ENCODE measurements at regions of chr20 and their contacts with region 1.

Region 1: GRCh38 chr20:11581271-11581670 is 336.4 kb upstream of the BTBD3 start:
- DNase-seq: no peak
- ATAC-seq: peak; percentile 45
- H3K4me3 ChIP-seq: no peak overlapping the region
- H3K27ac ChIP-seq: no peak overlapping the region
- H3K4me1 ChIP-seq: no peaks in the 10 kb centered on the region
- H3K27me3 ChIP-seq: no peaks in the 10 kb centered on the region
- CTCF ChIP-seq: no peak
- EP300 ChIP-seq: no peak
- POLR2A ChIP-seq: no peak
- RAD21 ChIP-seq: no peak

Region 2: DNA sequence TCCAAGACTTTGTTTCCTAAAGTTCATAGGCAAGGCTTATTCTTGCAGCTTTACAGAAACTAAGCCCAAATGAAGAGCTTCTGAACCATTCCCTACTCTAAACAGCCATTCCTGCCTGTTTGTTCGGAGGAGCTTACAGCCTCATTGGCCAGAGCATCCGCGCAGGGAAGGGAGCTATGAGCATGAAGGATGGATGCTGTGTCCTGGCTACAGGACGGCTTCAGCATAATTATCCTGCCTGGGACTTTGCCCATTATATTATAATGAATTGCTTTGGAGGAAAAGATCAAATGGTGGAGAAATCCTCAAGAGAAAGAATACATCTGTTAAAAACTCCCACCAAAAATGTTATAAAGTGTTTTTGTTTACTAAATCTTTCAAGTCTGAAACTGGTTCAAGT is 41.8 kb before region 1 on chr20:
- CTCF ChIA-PET with region 1: no interaction called
- POLR2A ChIA-PET with region 1: no interaction called
- RAD21 ChIA-PET with region 1: no interaction called
- SMC1A ChIA-PET with region 1: no interaction called
- in situ Hi-C with region 1: no loop called
- intact Hi-C with region 1: no loop called
- DNase-seq: no peak
- ATAC-seq: no peak
- H3K4me3 ChIP-seq: no peak overlapping the region
- H3K27ac ChIP-seq: no peak overlapping the region
- H3K4me1 ChIP-seq: no peaks in the 10 kb centered on the region
- H3K27me3 ChIP-seq: no peaks in the 10 kb centered on the region
- CTCF ChIP-seq: no peak
- EP300 ChIP-seq: no peak
- POLR2A ChIP-seq: no peak
- RAD21 ChIP-seq: no peak

Region 3: DNA sequence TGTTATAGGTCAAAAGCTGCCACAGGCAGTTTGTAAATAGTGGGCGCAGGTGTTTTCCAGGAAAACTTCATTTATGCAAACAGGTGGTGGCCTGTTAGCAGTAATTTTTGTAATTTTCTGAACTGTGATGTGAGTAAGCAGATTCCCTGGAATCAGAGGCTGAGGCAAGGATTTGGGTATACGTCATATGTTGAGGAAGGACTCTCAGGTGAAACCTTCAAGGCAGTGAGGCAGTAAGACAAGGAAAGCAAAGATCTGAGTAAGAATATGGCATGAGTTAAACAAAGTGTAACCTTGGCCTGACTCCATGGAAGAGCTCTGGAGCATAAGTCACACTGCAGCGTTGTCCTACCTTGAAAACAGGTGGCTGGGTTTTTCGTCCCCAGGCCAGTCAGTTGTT is 45.3 kb after region 1 on chr20:
- CTCF ChIA-PET with region 1: no interaction called
- POLR2A ChIA-PET with region 1: no interaction called
- RAD21 ChIA-PET with region 1: no interaction called
- SMC1A ChIA-PET with region 1: no interaction called
- in situ Hi-C with region 1: no loop called
- intact Hi-C with region 1: loop called (anchors 5 kb)
- DNase-seq: no peak
- ATAC-seq: no peak
- H3K4me3 ChIP-seq: no peak overlapping the region
- H3K27ac ChIP-seq: no peak overlapping the region
- H3K4me1 ChIP-seq: no peaks in the 10 kb centered on the region
- H3K27me3 ChIP-seq: no peaks in the 10 kb centered on the region
- CTCF ChIP-seq: no peak
- EP300 ChIP-seq: no peak
- POLR2A ChIP-seq: no peak
- RAD21 ChIP-seq: no peak

Measured in GM12878 (cell line).